ENCODE measurements at regions of chr11 and their contacts with region 1.

Region 1: DNA sequence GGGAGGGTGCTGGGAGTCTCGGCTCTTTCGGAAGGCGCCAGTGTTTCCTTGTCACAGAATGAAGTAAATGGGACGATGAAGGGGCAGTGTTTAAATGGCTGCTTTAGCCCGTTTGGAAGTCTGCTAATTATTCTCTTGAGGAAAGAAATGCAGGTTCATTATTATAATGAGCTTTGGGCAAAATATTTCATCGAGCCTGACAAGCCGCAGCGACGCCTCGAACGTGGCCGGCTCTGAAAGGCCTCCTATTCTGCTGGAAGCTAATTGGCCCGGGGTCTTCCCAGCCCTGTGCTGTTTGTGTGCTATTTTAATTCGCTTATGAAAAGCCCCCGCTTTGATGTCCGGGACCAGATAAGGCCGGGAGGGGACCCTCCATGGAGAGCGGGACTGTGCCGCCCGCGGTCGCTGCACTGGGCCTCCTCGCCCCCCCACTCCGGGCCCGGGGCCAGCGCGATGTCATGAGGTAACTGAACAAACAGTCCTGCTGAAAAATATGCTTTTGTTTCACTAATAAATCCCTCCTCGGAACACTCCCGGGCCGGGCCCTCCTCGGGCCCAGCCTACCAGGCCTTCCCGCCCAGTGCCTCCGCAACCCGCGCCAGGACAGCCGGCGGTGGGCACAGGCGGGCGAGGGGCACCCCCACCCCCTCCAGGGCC is 78.4 kb downstream of the CDKN1C start:
- DNase-seq: peak; percentile 79
- H3K4me3 ChIP-seq: no peak overlapping the region
- H3K27ac ChIP-seq: peak overlapping the region; percentile 24 to 76 (median 56)
- H3K4me1 ChIP-seq: peaks cover 18 to 31% (median 18%) of the 10 kb centered on the region in 4 donors
- H3K27me3 ChIP-seq: no peaks in the 10 kb centered on the region
- CTCF ChIP-seq: no peak
- EP300 ChIP-seq: no peak
- POLR2A ChIP-seq: no peak

Region 2: DNA sequence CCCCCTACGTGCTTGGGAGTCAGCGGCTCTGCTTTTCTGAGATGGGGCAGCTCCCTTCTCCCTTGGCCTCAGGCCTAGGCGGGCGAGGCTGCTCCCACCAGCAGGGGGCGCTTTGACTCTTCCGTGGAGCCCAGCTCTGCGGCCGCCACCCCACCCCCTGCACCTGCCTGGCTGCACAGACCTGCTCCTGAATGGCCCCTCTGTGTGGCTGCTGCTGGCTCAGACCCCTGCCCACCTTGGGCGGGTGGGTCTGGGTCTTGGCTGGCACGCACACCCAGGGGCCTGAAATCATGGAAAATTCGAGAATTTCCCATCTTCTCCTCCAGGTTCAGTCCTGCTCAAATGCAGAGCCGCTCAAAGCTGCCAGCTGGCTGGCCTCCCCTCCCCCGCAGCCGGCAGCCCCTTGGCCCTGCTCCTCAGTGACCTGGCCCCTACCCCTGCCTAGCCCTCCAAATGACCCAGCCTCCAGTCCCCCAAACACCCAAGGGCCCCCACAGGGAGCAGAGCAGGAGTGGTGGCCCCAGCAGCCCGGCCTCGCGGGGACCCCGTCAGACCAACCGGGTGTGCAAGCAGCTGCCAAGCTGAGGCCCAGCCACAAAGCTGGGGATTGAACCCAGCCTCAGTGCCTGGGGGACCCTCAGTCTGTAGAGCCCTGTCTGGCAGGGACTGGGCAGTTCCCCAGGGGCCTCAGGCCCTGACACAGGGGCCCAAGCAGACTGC is 924.5 kb before region 1 on chr11:
- in situ Hi-C with region 1: no loop called
- intact Hi-C with region 1: loop called (anchors 5 kb)
- DNase-seq: peak; percentile 80
- H3K4me3 ChIP-seq: no peak overlapping the region
- H3K27ac ChIP-seq: peak overlapping the region in 3 of 4 donors; percentile 66 to 74 (median 68)
- H3K4me1 ChIP-seq: peaks cover 0 to 37% (median 9%) of the 10 kb centered on the region in 4 donors
- H3K27me3 ChIP-seq: no peaks in the 10 kb centered on the region
- CTCF ChIP-seq: peak; percentile 84 to 94 (median 87)
- EP300 ChIP-seq: no peak
- POLR2A ChIP-seq: no peak

Region 3: DNA sequence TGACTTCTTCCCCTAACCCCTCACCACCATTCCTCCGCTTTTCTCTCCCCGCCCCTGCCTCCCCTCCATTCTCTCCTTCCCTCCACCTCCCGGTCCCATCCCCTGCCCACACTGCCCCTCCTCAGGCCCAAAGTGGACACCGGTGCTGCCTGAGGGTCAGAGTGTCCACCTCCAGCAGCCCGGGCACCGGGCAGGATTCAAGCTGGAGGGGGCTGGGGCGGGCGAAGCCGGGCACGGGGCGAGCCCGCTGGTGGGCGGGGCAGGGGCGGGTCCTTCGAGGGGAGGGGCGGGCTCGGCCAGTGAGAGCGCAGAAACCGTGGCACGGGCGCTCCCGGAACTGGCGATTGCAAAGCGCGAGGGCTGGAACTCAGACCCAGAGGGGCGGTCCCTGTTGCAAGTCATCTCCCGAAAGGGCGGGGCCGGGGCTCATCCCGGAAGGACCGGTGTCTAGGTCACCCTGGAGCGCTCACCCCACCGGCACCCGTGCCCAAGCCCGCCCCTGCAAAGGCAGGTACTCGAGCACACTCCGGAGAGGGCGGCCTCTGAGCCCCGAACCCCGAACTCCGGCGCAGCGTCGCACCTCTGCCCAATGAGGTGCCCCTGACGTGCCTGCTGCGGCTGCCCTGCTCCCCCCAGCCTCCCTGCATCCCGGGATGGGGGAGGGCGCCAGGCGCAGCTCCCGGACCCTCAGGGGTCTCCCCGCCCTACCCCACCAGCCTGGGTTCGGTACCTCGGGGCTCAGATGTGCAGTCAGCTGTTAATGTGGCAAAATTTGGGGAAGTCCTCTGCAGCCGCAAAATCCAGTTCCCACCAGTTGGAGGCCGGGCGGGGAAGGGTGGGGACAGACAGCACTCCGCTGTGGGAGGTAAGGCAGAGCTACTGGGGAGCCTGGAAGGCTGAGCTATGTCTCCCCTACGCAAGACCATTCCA is 95.0 kb after region 1 on chr11:
- in situ Hi-C with region 1: no loop called
- intact Hi-C with region 1: no loop called
- DNase-seq: peak; percentile 99
- H3K4me3 ChIP-seq: peak overlapping the region; percentile 39 to 66 (median 64)
- H3K27ac ChIP-seq: peak overlapping the region; percentile 85 to 93 (median 92)
- H3K4me1 ChIP-seq: peaks cover 3 to 60% (median 22%) of the 10 kb centered on the region in 4 donors
- H3K27me3 ChIP-seq: no peaks in the 10 kb centered on the region
- CTCF ChIP-seq: no peak
- EP300 ChIP-seq: peak; percentile 59
- POLR2A ChIP-seq: peak; percentile 94

Region 4: GRCh38 chr11:3685923-3686322 is 878.8 kb after region 1 on chr11:
- in situ Hi-C with region 1: no loop called
- intact Hi-C with region 1: no loop called
- DNase-seq: no peak
- H3K4me3 ChIP-seq: no peak overlapping the region
- H3K27ac ChIP-seq: no peak overlapping the region
- H3K4me1 ChIP-seq: no peaks in the 10 kb centered on the region
- H3K27me3 ChIP-seq: no peaks in the 10 kb centered on the region
- CTCF ChIP-seq: no peak
- EP300 ChIP-seq: no peak
- POLR2A ChIP-seq: no peak

Measured in transverse colon (tissue), 4 donors.